BJ (cell line): ENCODE measurements at regions of chr19 and their contacts with region 1.

Region 1: DNA sequence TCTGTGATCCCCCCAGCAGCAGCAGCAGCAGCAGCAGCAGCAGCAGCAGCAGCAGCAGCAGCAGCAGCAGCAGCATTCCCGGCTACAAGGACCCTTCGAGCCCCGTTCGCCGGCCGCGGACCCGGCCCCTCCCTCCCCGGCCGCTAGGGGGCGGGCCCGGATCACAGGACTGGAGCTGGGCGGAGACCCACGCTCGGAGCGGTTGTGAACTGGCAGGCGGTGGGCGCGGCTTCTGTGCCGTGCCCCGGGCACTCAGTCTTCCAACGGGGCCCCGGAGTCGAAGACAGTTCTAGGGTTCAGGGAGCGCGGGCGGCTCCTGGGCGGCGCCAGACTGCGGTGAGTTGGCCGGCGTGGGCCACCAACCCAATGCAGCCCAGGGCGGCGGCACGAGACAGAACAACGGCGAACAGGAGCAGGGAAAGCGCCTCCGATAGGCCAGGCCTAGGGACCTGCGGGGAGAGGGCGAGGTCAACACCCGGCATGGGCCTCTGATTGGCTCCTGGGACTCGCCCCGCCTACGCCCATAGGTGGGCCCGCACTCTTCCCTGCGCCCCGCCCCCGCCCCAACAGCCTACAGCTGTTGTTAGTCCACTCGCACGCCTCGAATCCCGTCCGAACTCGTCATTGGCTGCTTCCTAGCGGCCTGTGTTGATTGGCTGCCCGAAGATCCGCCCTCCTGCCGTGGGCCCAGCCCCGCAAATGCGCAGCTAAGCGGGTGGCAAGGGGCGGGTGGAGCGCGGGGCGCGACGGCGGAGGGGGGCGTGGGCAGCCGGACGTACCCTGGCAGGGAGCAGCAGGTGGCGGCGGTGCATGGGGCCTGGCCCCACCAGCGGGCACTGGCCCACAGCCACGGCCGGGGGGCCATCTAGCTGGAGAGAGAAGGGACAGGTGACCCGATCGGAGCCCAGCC is 1.4 kb upstream of the SIX5 start:
- DNase-seq: peak; percentile 83
- H3K4me3 ChIP-seq: peak overlapping the region; percentile 42
- H3K27me3 ChIP-seq: no peaks in the 10 kb centered on the region
- CTCF ChIP-seq: peak; percentile 91

Region 2: DNA sequence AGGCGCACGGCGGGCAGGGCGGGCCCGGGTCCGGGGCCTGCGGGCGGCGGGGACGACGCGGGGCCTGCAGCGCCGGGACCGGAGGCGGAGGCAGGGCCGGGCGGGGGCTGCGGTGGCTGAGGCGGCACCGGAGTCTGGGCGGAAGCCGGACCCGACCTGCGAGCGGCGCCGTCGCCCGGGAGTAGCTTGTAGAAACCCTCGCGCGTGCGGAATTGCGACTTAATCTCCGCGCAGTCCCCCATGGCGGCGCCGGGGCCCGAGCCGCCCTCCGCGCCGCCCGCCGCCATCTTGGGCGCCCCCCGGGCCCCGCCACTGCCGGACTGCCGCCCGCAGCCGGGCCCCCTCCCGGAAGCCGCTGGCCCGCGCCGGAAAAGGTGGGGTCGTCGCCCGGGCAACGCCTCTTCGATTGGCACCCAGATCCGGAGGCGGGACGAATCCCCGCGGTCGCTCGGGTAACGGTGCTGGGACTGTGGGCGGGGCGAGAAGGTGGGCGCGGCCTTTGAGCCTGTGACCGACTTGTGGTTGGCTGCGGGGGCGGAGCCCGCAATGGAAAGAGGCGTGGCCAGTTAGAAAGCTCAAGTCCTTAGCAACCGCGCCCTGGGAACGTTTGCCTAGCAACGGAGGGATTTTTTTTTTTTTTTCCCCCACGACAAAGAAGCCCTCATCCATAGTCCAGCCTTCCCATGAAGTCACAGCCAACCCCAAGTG is 22.2 kb after region 1 on chr19 and contains the start of gene DMWD:
- CTCF ChIA-PET with region 1: interaction called, 154 read pairs
- POLR2A ChIA-PET with region 1: interaction called, 11 read pairs
- DNase-seq: peak; percentile 85
- H3K4me3 ChIP-seq: peak within 1 kb of the TSS; percentile 54
- H3K27me3 ChIP-seq: no peaks in the 10 kb centered on the region
- CTCF ChIP-seq: no peak
- polyA plus RNA-seq, gene DMWD: 20.3 and 28.6 TPM in 2 replicates

Region 3: GRCh38 chr19:45879971-45880370 is 109.5 kb after region 1 on chr19:
- CTCF ChIA-PET with region 1: interaction called, 4 read pairs
- POLR2A ChIA-PET with region 1: interaction called, 10 read pairs
- DNase-seq: no peak
- H3K4me3 ChIP-seq: no peak overlapping the region
- H3K27me3 ChIP-seq: no peaks in the 10 kb centered on the region
- CTCF ChIP-seq: no peak